SK-N-SH (cell line): ENCODE measurements at regions of chr19 and their contacts with region 1.

Region 1: DNA sequence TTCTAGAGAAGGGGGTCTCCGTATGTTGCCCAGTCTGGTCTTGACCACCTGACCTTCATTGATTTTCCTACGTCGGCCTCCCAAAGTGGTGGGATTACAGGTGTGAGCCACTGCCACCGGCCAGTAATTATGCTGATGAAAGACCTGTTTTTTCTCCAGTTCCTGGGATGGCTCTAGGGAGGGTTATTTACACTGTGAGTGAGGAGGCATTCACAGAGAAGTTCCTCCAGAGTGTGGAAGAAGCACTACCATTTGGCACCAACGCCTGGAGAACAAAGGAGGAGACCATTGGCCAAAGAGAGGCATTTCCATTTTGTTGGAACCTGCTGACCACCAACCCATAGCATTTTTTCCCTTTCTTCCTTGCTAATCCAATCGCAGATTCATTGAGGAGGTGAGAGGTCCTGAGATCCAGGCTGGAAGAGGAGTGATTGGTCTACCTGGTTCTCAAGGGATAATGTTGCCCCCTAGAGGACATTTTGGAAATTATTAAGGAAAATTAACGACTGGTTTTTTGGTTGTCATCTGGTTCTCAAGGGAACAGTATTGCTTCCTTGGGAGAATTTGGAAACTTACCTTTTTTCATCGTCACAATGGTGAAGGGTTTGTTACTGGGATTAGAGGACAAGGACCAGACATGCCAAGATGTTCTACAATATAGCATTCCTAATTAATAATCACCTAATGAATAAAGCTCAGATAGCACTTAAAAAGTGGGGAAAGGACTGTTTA is 5.5 kb upstream of the SAE1 start:
- DNase-seq: peak; percentile 73
- H3K4me3 ChIP-seq: no peak overlapping the region
- H3K27ac ChIP-seq: no peak overlapping the region
- H3K4me1 ChIP-seq: peaks cover 0 to 12% of the 10 kb centered on the region in 2 experiments; a peak in 2 of 4 replicates
- H3K27me3 ChIP-seq: no peaks in the 10 kb centered on the region
- CTCF ChIP-seq: peak; percentile 74
- EP300 ChIP-seq: no peak
- RAD21 ChIP-seq: peak; percentile 94

Region 2: DNA sequence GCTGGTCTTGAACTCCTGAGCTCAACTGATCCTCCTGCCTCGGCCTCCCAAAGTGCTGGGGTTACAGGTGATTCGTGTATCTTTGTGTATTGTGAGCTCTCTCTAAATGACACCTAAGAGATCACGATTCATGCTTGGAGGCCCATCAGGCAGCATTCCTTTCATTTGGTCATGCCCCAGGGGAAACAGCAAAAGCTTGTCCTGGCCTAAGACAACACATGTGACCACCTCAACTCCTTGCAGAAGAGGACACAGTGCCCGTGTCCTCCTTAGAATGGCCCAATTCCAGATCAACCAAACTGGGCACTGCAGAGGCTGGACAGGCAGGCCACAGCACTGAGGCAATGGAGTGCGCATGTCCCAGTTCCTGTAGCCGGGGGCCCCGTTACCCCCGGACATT is 44.0 kb before region 1 on chr19:
- CTCF ChIA-PET with region 1: interaction called, 40 read pairs
- POLR2A ChIA-PET with region 1: interaction called, 3 read pairs
- DNase-seq: no peak
- H3K4me3 ChIP-seq: no peak overlapping the region
- H3K27ac ChIP-seq: no peak overlapping the region
- H3K4me1 ChIP-seq: 0 out of 4 replicates have a peak, but pooled peaks cover 0 to 5% of the 10 kb centered on the region in 2 experiments
- H3K27me3 ChIP-seq: no peaks in the 10 kb centered on the region
- CTCF ChIP-seq: no peak
- EP300 ChIP-seq: no peak
- RAD21 ChIP-seq: no peak

Region 3: DNA sequence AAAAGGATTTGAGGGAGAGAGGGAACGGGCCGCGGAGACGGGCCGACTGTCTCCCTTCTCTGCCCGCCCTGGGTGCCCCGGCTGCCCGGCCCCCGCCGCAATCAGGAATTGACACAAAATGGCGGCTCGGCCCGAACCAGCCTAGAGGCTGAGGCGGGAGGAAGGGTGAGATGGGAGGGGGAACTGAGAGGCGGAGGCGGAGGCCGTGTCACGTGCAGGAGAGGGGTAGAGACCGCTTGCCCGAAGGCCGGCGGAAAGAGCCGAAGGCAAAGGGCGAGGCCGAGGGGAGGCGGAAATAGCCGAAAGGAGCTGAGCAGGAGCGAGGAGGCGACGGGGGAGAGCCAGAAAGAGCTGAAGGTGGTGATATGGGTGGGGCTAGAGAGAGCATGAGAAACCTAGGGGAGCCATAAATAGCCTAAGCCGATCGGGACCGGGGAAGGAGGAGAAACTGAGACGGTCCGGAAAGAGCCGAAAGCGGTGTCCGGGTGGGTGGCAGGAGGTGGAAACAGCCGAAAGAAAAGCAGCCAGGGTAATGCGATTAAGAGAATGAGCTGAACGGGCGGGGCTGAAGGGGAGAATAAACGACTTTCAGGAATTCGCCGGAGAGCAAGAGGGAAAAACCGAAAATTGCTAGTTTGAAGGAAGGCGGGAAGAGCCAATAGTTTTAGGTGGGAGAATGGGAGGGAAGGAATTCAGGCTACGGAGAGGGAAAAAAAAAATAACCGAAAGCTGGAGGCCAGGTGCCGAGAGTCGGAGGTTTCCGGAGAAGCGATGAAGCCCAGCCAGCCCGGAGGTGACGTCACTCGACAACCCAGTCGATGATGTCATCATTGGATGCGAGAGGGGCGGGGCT is 11.9 kb before region 1 on chr19 and contains the start of gene ZC3H4:
- CTCF ChIA-PET with region 1: interaction called, 26 read pairs
- POLR2A ChIA-PET with region 1: interaction called, 5 read pairs
- DNase-seq: peak; percentile 92
- H3K4me3 ChIP-seq: peak within 1 kb of the TSS; percentile 78 to 92
- H3K27ac ChIP-seq: peak within 1 kb of the TSS; percentile 99 to 100
- H3K4me1 ChIP-seq: peaks cover 18 to 23% of the 10 kb centered on the region in 2 experiments
- H3K27me3 ChIP-seq: no peaks in the 10 kb centered on the region
- CTCF ChIP-seq: no peak
- EP300 ChIP-seq: peak in 1 of 2 experiments; percentile 28; a peak in 1 of 4 replicates
- RAD21 ChIP-seq: no peak
- polyA plus RNA-seq, gene ZC3H4: 3.9 and 7.6 TPM in 2 replicates